ENCODE measurements at regions of chr19 and their contacts with region 1.

Region 1: GRCh38 chr19:47243776-47244547 is 12.4 kb upstream of the CCDC9 start:
- DNase-seq: peak; percentile 77
- H3K4me3 ChIP-seq: peak overlapping the region; percentile 57
- CTCF ChIP-seq: peak; percentile 97

Region 2: DNA sequence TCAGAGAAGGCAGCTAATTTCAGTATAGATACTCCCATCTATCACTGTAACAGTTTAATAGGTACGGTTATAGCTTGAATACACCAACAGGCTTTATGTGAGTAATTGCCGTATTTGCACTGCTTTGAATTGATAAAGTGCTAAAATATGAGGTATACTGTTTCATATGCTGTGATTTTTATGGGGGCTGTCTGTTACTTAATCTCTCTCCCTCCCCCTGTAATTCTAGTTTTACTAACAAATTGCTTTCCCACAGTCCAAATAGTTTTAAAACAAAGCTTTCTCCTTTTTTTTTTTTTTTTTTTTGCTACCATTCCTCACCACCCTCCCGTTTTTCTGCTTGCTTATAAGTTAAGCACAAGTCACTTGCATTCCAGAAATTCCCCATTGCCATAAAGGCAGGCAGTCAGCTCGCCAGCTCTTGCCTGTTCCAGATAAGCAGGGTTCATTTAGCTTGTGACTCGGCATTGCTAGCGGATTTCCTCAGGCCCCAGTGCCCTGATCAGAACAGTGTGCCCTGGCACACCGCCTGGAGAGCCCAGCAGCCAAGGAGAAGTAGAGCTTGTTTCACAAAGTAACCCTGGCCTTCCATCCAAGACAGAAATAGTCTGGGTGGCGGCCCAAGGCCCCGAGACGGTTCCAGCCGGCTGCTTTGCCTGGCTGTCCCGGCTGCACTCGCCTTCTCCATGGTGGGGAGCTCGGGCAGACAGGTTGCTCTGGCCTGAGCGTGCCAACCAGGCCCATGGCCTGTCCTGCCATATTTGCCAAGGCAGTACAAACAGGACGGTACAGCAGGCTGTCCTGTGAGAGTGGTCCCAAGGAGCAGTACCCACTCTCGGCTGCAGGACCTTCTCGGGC is 267.8 kb before region 1 on chr19:
- CTCF ChIA-PET with region 1: no interaction called
- POLR2A ChIA-PET with region 1: no interaction called
- DNase-seq: peak; percentile 96
- H3K4me3 ChIP-seq: no peak overlapping the region
- CTCF ChIP-seq: no peak

Region 3: DNA sequence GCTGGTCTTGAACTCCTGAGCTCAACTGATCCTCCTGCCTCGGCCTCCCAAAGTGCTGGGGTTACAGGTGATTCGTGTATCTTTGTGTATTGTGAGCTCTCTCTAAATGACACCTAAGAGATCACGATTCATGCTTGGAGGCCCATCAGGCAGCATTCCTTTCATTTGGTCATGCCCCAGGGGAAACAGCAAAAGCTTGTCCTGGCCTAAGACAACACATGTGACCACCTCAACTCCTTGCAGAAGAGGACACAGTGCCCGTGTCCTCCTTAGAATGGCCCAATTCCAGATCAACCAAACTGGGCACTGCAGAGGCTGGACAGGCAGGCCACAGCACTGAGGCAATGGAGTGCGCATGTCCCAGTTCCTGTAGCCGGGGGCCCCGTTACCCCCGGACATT is 162.9 kb before region 1 on chr19:
- CTCF ChIA-PET with region 1: interaction called, 11 read pairs
- POLR2A ChIA-PET with region 1: interaction called, 3 read pairs
- DNase-seq: no peak
- H3K4me3 ChIP-seq: no peak overlapping the region
- CTCF ChIP-seq: no peak

Region 4: GRCh38 chr19:47152224-47153017 is 91.5 kb before region 1 on chr19:
- CTCF ChIA-PET with region 1: interaction called, 512 read pairs
- POLR2A ChIA-PET with region 1: interaction called, 9 read pairs
- DNase-seq: no peak
- H3K4me3 ChIP-seq: no peak overlapping the region
- CTCF ChIP-seq: no peak

Region 5: GRCh38 chr19:47176627-47177090 is 67.3 kb before region 1 on chr19:
- CTCF ChIA-PET with region 1: interaction called, 14 read pairs
- POLR2A ChIA-PET with region 1: interaction called, 3 read pairs
- DNase-seq: peak; percentile 93
- H3K4me3 ChIP-seq: no peak overlapping the region
- CTCF ChIP-seq: no peak

Region 6: DNA sequence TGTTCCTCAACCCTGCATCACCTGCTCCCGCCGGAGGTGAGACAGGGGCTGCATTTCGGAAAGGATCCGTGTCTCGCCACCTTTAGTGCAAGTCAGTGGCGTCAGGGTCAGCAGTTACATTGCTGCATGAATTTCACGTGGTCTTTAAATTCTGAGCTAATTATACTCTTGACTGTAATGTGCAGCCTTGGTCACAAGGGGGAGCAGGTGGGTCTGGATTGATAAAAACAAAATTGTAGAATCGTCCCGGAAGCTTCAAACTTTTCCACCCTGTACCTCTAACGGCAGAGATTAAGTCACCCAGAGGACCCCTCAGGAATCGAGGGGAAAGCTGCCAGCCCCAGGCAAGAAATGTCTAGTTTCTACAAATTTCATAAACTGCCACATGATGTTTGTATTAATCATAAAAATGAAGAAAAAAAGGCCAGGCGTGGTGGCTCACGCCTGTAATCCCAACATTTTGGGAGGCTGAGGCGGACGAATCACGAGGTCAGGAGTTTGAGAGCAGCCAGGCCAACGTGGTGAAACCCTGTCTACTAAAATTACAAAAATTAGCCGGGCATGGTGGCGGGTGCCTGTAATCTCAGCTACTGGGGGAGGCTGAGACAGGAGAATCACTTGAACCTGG is 33.2 kb before region 1 on chr19:
- CTCF ChIA-PET with region 1: interaction called, 570 read pairs
- POLR2A ChIA-PET with region 1: interaction called, 21 read pairs
- DNase-seq: no peak
- H3K4me3 ChIP-seq: no peak overlapping the region
- CTCF ChIP-seq: peak; percentile 70

Region 7: DNA sequence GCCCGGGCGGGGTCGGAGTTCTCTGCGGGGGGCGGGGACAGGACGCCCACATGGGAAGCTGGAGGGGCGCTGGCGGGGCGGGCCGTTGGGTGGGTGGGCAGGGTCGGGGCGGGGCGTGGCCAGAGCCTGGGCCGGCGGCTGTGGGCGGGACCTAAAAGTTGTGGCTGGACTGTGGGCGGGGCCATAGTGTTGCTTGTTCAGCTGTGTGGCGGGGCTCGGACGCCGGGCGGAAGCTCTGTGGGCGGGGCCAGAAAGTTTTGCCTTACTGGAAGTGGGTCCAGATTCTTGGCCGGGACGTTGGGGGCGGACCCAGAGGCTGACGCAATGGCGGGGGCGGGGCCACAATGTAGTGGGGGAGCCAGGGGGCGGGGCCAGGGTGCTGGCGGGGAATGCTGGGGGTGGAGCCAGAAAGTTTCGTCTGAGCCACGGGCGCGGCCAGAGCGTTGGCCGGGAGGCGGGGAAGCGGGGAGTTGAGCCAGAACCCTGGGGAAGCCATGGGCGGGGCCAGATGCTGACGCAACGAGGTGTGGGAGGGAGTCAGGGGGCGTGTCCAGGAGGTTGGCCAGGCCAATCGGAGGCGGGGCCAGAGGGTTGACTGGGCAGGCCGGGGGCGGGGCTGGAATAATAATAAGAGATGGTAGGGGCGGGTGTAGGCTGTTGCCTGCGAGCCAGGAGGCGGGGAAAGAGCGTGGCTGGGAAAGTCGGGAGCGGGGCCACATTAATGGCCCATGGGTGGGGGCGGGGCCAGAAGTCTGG is 12.9 kb after region 1 on chr19:
- CTCF ChIA-PET with region 1: interaction called, 114 read pairs
- POLR2A ChIA-PET with region 1: interaction called, 9 read pairs
- DNase-seq: peak; percentile 92
- H3K4me3 ChIP-seq: peak overlapping the region; percentile 71
- CTCF ChIP-seq: no peak

Region 8: GRCh38 chr19:47330466-47330869 is 86.5 kb after region 1 on chr19:
- CTCF ChIA-PET with region 1: no interaction called
- POLR2A ChIA-PET with region 1: no interaction called
- DNase-seq: no peak
- H3K4me3 ChIP-seq: no peak overlapping the region
- CTCF ChIP-seq: no peak

Measured in AG04449 (cell line).